GM12878 (cell line): ENCODE measurements at regions of chr14 and their contacts with region 1.

Region 1: GRCh38 chr14:35229495-35230089 is 62.6 kb upstream of the PSMA6 start:
- DNase-seq: no peak
- ATAC-seq: peak; percentile 79
- H3K4me3 ChIP-seq: no peak overlapping the region
- H3K27ac ChIP-seq: no peak overlapping the region
- H3K4me1 ChIP-seq: peaks cover 5% of the 10 kb centered on the region; the same call in 1 of the 2 replicates
- H3K27me3 ChIP-seq: no peaks in the 10 kb centered on the region
- CTCF ChIP-seq: peak; percentile 33 to 47 (median 40); a peak in 5 of 6 replicates
- EP300 ChIP-seq: no peak
- POLR2A ChIP-seq: no peak
- RAD21 ChIP-seq: peak; percentile 65

Region 2: GRCh38 chr14:35068238-35069012 is 161.2 kb before region 1 on chr14:
- CTCF ChIA-PET with region 1: no interaction called
- POLR2A ChIA-PET with region 1: no interaction called
- RAD21 ChIA-PET with region 1: no interaction called
- SMC1A ChIA-PET with region 1: no interaction called
- in situ Hi-C with region 1: no loop called
- intact Hi-C with region 1: no loop called
- DNase-seq: no peak
- ATAC-seq: no peak
- H3K4me3 ChIP-seq: no peak overlapping the region
- H3K27ac ChIP-seq: no peak overlapping the region
- H3K4me1 ChIP-seq: no peaks in the 10 kb centered on the region
- H3K27me3 ChIP-seq: no peaks in the 10 kb centered on the region
- CTCF ChIP-seq: no peak
- EP300 ChIP-seq: no peak
- POLR2A ChIP-seq: no peak
- RAD21 ChIP-seq: no peak

Region 3: DNA sequence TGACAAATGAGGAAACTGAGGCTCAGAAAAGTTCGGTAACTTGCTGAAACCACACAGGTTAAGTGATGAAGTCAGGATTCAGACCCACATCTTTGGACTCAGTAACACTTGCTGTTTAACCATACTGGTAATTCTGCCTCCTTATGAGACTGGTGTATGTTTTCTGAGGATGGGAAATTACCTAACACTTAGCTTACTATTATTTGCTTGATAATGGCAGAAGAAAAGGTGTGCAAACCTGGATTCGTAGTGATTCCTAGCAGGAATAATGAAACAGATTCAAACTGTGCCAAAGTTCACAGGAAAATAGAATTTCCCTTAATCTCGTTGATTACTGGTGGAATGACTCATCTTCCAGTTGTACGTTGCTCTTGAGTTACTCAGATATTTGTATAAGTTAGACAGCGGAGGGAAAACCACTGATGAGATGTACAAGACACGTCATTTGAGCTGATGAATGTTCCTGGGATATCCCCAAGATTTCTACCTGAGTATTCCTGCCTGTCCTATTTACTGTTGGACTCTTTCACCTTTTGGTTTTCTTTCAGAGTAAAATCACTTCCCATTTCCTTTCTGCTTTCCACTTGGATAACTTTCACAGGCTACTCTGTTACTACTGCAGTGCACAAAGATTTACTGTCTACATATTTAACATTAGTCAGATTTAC is 69.7 kb before region 1 on chr14:
- CTCF ChIA-PET with region 1: interaction called, 12 read pairs
- POLR2A ChIA-PET with region 1: no interaction called
- RAD21 ChIA-PET with region 1: no interaction called
- SMC1A ChIA-PET with region 1: interaction called, 4 read pairs
- in situ Hi-C with region 1: no loop called
- intact Hi-C with region 1: no loop called
- DNase-seq: no peak
- ATAC-seq: peak; percentile 64
- H3K4me3 ChIP-seq: no peak overlapping the region
- H3K27ac ChIP-seq: peak overlapping the region; percentile 45; the same call in 1 of the 2 replicates
- H3K4me1 ChIP-seq: peaks cover 19% of the 10 kb centered on the region
- H3K27me3 ChIP-seq: no peaks in the 10 kb centered on the region
- CTCF ChIP-seq: no peak
- EP300 ChIP-seq: peak in 1 of 2 experiments; percentile 14; a peak in 1 of 4 replicates
- POLR2A ChIP-seq: no peak
- RAD21 ChIP-seq: no peak

Region 4: DNA sequence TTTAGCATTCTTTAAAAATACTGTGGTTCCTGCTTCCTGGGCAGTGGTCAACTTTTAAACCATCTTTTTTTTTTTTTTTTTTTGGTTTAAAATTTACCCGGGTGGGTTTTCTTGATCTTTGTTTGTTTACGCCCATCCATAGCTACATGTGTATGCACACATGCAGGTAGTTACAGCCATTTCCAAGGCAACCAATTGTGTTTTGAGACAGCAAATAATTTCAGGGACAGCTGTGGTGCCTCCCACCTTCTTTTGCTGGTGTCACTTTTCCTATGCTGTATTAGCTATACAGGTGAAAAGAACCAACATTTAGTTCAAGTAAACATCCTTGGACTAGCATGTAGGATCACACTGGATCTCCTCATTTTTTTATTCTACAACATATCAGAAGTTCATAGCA is 10.6 kb after region 1 on chr14:
- CTCF ChIA-PET with region 1: interaction called, 14 read pairs
- POLR2A ChIA-PET with region 1: interaction called, 3 read pairs
- RAD21 ChIA-PET with region 1: no interaction called
- SMC1A ChIA-PET with region 1: interaction called, 12 read pairs
- in situ Hi-C with region 1: no loop called
- intact Hi-C with region 1: no loop called
- DNase-seq: no peak
- ATAC-seq: no peak
- H3K4me3 ChIP-seq: no peak overlapping the region
- H3K27ac ChIP-seq: no peak overlapping the region
- H3K4me1 ChIP-seq: peaks cover 8% of the 10 kb centered on the region; the same call in 1 of the 2 replicates
- H3K27me3 ChIP-seq: no peaks in the 10 kb centered on the region
- CTCF ChIP-seq: no peak
- EP300 ChIP-seq: no peak
- POLR2A ChIP-seq: no peak
- RAD21 ChIP-seq: no peak

Region 5: DNA sequence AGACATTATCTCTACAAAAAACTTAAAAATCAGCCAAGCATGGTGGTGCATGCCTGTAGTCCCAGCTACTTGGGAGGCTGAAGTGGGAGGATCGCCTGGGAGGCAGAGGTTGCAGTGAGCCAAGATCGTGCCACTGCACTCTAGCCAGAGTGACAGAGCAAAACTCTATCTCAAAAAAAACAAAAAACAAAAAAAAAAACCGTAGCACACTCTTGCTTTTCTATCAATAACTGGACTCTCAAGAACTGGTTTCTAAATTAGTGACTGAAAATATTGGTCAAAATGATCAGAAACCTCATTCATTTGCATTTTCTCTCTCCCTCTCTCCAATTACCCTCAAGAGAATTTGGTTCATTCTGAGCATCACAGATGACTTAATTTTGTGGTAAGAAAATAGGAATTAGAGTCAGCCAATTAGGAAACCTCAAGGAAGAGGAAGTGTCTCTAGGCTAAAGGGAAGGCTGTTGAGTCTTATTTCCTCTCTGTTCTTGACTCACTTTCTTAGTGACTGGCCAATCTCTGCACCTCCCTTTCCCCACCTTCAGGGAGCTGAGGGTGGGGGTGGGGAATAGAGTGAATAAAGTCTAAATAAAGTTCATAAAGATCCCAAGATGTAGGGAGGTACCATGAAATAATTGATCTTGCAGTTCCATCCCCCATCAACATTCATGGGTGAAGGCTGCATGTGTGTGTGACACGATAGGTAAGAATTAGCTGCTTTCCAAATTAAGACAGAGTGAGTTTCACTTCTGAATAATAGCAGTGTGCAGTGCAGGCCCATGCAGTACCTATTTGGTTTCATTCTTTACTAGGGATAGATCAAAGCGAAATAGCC is 55.8 kb after region 1 on chr14:
- CTCF ChIA-PET with region 1: interaction called, 25 read pairs
- POLR2A ChIA-PET with region 1: no interaction called
- RAD21 ChIA-PET with region 1: interaction called, 21 read pairs
- SMC1A ChIA-PET with region 1: interaction called, 11 read pairs
- in situ Hi-C with region 1: no loop called
- intact Hi-C with region 1: loop called (anchors 5 kb)
- DNase-seq: peak; percentile 95
- ATAC-seq: peak; percentile 82
- H3K4me3 ChIP-seq: peak overlapping the region; percentile 51; the same call in 1 of the 2 replicates
- H3K27ac ChIP-seq: peak overlapping the region; percentile 91
- H3K4me1 ChIP-seq: peaks cover 53% of the 10 kb centered on the region
- H3K27me3 ChIP-seq: no peaks in the 10 kb centered on the region
- CTCF ChIP-seq: no peak
- EP300 ChIP-seq: peak; percentile 70 to 73; a peak in 3 of 4 replicates
- POLR2A ChIP-seq: no peak
- RAD21 ChIP-seq: peak; percentile 19; the same call in 1 of the 2 replicates

Region 6: GRCh38 chr14:35301735-35302528 is 72.3 kb after region 1 on chr14:
- CTCF ChIA-PET with region 1: interaction called, 14 read pairs
- POLR2A ChIA-PET with region 1: no interaction called
- RAD21 ChIA-PET with region 1: interaction called, 5 read pairs
- SMC1A ChIA-PET with region 1: interaction called, 5 read pairs
- in situ Hi-C with region 1: no loop called
- intact Hi-C with region 1: loop called (anchors 5 kb)
- DNase-seq: no peak
- ATAC-seq: peak; percentile 30
- H3K4me3 ChIP-seq: no peak overlapping the region; the same call in 1 of the 2 replicates
- H3K27ac ChIP-seq: peak overlapping the region; percentile 13; the same call in 1 of the 2 replicates
- H3K4me1 ChIP-seq: peaks cover 30% of the 10 kb centered on the region
- H3K27me3 ChIP-seq: no peaks in the 10 kb centered on the region
- CTCF ChIP-seq: no peak
- EP300 ChIP-seq: no peak
- POLR2A ChIP-seq: no peak
- RAD21 ChIP-seq: no peak